ENCODE measurements at regions of chr11 and their contacts with region 1.

Region 1: DNA sequence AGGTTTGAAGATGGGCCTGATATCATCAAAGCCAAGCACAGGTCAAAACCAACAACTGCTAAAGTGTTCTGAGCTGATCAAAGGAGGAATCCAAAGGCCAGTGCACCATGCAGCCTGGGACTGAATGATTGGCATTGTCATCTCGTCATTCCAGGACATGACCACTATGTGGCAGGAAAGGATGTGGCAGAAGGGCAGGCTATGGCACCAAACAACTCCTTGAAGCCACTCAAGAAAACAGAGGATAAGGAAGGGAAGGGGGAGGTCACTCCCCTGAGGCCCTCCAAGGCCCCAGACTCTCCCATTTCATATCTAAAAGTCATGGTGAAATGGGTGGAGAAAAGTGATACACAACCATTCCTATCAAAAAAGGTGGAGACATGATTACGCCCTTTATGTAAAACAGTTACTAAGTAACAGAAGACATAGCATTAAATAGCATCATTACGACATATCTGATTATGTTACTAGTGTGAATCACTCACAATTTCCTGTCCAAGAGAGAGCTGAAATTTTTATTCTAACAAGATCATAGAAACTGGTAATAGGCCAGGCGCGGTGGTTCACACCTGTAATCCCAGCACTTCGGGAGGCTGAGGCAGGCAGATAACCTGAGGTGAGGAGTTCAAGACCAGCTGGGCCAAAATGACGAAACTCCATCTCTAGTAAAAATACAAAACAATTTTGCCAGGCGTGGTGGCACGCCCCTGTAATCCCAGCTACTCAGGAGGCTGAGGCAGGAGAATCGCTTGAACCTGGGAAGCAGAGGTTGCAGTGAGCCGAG is 49.3 kb downstream of the AHNAK start:
- DNase-seq: peak; percentile 81
- ATAC-seq: peak; percentile 75
- H3K4me3 ChIP-seq: no peak overlapping the region
- H3K27ac ChIP-seq: no peak overlapping the region; the same call in 1 of the 2 replicates
- H3K4me1 ChIP-seq: peaks cover 14% of the 10 kb centered on the region
- H3K27me3 ChIP-seq: no peaks in the 10 kb centered on the region
- CTCF ChIP-seq: peak; percentile 24; the same call in 1 of the 2 replicates
- POLR2A ChIP-seq: no peak
- RAD21 ChIP-seq: peak; percentile 34

Region 2: DNA sequence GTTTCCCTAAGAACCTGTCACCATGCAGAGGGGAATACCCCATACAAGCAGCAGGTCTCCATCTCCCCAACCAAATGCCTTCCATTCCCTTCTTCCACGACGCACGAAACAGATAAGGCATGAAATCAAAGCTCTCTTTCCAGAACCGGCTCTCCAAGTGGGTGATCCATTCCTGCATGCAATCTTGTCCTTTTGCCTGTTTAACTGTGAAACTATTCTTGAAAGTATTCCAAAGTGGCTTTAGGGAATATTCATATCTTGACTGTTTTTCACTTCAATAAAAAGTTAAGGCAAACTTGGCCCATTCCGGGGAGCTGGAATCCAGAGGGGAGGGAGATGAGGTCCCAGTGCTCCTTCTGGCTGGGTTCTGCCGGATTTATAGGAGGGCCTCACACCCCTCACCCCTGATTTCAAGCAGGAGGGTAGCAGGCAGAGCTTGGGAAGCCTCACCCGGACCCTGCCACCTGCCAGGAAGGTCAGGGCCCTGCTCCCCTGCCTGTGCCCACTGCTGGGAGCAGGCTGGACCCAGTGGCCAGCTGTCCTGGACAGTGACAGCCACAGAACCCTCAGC is 17.6 kb before region 1 on chr11:
- CTCF ChIA-PET with region 1: interaction called, 6 read pairs
- POLR2A ChIA-PET with region 1: interaction called, 10 read pairs
- dilution Hi-C with region 1: no loop called
- in situ Hi-C with region 1: no loop called
- intact Hi-C with region 1: no loop called
- DNase-seq: no peak
- ATAC-seq: no peak
- H3K4me3 ChIP-seq: no peak overlapping the region
- H3K27ac ChIP-seq: peak overlapping the region; percentile 16; the same call in 1 of the 2 replicates
- H3K4me1 ChIP-seq: peaks cover 10% of the 10 kb centered on the region
- H3K27me3 ChIP-seq: no peaks in the 10 kb centered on the region
- CTCF ChIP-seq: no peak
- POLR2A ChIP-seq: no peak
- RAD21 ChIP-seq: no peak